ENCODE measurements at regions of chr11 and their contacts with region 1.

Region 1: DNA sequence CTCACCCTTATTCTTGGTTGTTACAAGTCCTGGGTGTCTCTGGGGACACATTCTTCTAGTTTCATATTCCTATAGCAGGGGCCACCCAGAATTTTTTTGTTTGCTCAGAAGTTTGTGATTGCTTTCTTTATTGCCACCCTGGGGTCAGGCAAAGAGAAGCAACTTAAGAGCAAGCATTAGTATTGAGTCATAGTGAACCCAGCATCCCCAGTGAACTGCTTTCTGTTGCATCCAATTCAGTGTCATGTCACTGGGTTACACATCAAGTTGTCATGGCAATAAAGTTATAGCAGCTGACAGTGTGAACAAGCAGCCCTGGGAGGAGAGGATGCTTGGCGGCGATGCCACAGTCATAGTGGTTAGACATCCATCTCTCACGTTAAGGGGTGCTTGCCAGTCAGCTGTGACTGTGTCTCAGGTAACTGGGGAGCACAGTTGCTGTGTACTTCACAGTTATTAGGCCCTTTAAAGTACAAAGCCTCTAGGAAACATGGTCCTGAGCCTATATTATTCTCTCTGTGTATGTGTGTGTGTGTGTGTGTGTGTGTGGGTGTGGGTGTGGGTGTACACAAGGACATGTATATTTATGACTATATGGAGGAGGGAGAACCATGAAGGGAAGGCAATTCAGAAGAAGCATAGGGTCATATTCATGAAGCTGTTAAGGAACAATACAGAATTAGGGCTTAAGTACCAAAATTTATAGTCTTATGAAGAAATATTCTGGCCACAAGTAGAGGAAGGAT is 52.5 kb downstream of the TRIM44 start:
- DNase-seq: no peak
- ATAC-seq: no peak
- H3K4me3 ChIP-seq: no peak overlapping the region
- H3K27ac ChIP-seq: no peak overlapping the region
- H3K4me1 ChIP-seq: no peaks in the 10 kb centered on the region
- H3K27me3 ChIP-seq: no peaks in the 10 kb centered on the region
- CTCF ChIP-seq: no peak

Region 2: GRCh38 chr11:35567737-35568465 is 147.2 kb before region 1 on chr11:
- intact Hi-C with region 1: no loop called
- DNase-seq: no peak
- ATAC-seq: peak in 3 of 4 donors; percentile 65 to 77 (median 72)
- H3K4me3 ChIP-seq: no peak overlapping the region
- H3K27ac ChIP-seq: no peak overlapping the region
- H3K4me1 ChIP-seq: no peaks in the 10 kb centered on the region
- H3K27me3 ChIP-seq: no peaks in the 10 kb centered on the region
- CTCF ChIP-seq: no peak

Region 3: DNA sequence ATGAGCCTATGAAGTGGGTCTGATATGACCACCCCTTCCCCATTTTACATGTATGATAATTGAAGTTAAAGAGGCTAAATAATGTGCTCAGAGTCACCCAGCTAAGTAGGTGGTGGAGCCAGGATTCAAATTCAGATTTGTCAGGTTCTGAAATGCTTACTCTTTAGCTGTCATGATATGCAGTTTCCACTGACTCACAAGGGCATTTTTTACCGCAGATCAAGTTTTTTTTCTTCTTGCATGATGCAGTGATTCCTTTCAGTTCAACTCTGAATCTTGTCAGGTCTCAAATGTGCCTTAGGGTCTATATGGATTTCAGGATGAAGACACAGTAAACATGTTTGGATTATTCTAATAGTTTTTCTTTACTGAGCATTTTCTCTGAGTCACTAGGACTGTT is 65.0 kb before region 1 on chr11:
- intact Hi-C with region 1: no loop called
- DNase-seq: no peak
- ATAC-seq: no peak
- H3K4me3 ChIP-seq: no peak overlapping the region
- H3K27ac ChIP-seq: no peak overlapping the region
- H3K4me1 ChIP-seq: no peaks in the 10 kb centered on the region
- H3K27me3 ChIP-seq: peaks cover 0 to 3% (median 0%) of the 10 kb centered on the region in 3 donors
- CTCF ChIP-seq: no peak

Region 4: DNA sequence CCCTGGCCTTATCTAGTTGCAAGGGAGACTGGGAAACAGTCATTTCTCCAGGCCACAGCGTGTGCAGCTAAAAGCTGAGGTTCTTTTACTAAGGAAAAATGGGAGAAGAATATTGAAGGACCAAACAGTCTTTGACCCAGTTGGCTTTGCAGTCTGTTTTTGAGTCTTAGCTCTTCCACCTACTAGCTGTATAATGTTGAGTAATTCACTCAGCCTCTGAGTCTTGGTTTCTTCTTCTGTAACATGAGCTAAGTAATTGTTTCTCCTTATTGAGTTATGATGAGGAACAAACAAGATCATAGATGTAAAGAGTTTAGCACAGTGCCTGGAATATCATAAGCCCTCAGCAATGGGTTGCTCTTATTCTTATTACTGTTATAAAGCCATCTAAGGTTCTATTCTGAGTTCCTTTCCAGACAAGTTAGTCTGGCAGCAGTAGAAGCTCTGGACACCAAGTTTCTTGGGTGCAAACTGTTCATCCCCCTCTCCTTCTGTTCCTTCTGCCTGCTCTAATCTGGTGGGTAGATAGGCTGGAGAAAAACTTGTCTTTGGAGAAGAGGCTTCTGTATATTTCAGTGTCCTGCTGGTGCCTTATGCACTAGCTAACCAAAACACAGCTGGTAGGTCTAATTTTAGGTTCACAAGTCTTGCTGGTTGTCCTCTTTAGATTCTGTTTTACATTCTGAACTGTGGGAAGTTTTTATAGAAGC is 39.0 kb before region 1 on chr11:
- intact Hi-C with region 1: loop called in 1 of 2 experiments (anchors 5 kb)
- DNase-seq: no peak
- ATAC-seq: peak; percentile 48 to 72 (median 58)
- H3K4me3 ChIP-seq: peak overlapping the region; percentile 26
- H3K27ac ChIP-seq: peak overlapping the region; percentile 78
- H3K4me1 ChIP-seq: peaks cover 71% of the 10 kb centered on the region
- H3K27me3 ChIP-seq: no peaks in the 10 kb centered on the region
- CTCF ChIP-seq: no peak

Region 5: DNA sequence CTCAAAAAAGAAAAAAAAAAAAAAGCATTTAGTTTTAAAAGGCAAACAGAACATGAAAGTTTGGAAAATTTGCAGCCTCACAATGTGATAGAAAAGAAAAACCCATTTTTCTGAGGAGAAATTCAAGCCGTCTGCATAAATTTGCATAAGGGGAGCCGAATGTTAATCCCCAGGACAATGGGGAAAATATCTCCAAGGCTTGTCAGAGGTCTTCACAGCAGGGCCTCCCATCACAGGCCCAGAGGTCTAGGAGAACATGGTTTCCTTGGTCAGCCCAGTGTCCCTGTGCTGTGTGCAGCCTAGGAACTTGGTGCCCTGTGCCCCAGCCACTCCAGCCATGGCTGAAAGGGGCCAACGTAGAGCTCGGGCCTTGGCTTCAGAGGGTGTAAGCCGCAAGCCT is 56.7 kb after region 1 on chr11:
- intact Hi-C with region 1: no loop called
- DNase-seq: no peak
- ATAC-seq: no peak
- H3K4me3 ChIP-seq: no peak overlapping the region
- H3K27ac ChIP-seq: no peak overlapping the region
- H3K4me1 ChIP-seq: no peaks in the 10 kb centered on the region
- H3K27me3 ChIP-seq: no peaks in the 10 kb centered on the region
- CTCF ChIP-seq: no peak